GM12878 (cell line): ENCODE measurements at regions of chr12 and their contacts with region 1.

Region 1: GRCh38 chr12:97046901-97047300 is 139.8 kb downstream of the NEDD1 start:
- DNase-seq: no peak
- ATAC-seq: no peak
- H3K4me3 ChIP-seq: no peak overlapping the region
- H3K27ac ChIP-seq: no peak overlapping the region
- H3K4me1 ChIP-seq: no peaks in the 10 kb centered on the region
- H3K27me3 ChIP-seq: no peaks in the 10 kb centered on the region; a peak in 1 of 4 replicates
- CTCF ChIP-seq: no peak
- EP300 ChIP-seq: no peak
- POLR2A ChIP-seq: no peak
- RAD21 ChIP-seq: no peak

Region 2: DNA sequence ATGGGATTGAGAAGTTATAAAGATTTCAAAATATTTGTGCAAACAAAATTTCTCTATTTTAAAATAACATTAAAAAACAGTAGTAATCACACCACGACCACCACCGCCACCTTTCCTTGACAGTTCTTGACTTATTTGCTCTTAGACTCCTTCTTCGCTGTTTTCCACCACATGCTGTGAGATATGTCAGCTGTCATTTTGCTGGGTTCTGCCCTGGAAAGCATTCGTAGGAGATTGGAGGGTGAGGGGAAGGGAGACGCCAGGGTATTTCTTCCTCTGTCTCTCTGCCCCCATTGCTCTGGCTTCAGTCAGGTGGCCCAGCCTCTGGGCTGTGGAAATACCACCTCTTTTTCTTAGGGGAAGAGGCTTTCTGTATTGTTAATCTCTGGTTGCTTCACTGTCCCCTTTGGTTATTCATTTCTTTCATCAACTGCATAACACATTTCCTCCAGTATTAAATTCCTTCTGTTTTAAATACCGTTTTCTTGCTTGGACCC is 46.3 kb after region 1 on chr12:
- CTCF ChIA-PET with region 1: no interaction called
- POLR2A ChIA-PET with region 1: no interaction called
- RAD21 ChIA-PET with region 1: no interaction called
- SMC1A ChIA-PET with region 1: no interaction called
- in situ Hi-C with region 1: no loop called
- intact Hi-C with region 1: loop called (anchors 2 kb)
- DNase-seq: no peak
- ATAC-seq: no peak
- H3K4me3 ChIP-seq: no peak overlapping the region
- H3K27ac ChIP-seq: no peak overlapping the region
- H3K4me1 ChIP-seq: no peaks in the 10 kb centered on the region
- H3K27me3 ChIP-seq: no peaks in the 10 kb centered on the region
- CTCF ChIP-seq: no peak
- EP300 ChIP-seq: no peak
- POLR2A ChIP-seq: no peak
- RAD21 ChIP-seq: no peak

Region 3: GRCh38 chr12:97308576-97309198 is 261.8 kb after region 1 on chr12:
- CTCF ChIA-PET with region 1: no interaction called
- POLR2A ChIA-PET with region 1: no interaction called
- RAD21 ChIA-PET with region 1: no interaction called
- SMC1A ChIA-PET with region 1: no interaction called
- in situ Hi-C with region 1: no loop called
- intact Hi-C with region 1: no loop called
- DNase-seq: peak; percentile 15
- ATAC-seq: peak; percentile 45; the same call in 2 of the 3 replicates
- H3K4me3 ChIP-seq: no peak overlapping the region
- H3K27ac ChIP-seq: no peak overlapping the region
- H3K4me1 ChIP-seq: no peaks in the 10 kb centered on the region
- H3K27me3 ChIP-seq: no peaks in the 10 kb centered on the region
- CTCF ChIP-seq: peak; percentile 52 to 62 (median 57); a peak in 5 of 6 replicates
- EP300 ChIP-seq: no peak
- POLR2A ChIP-seq: no peak
- RAD21 ChIP-seq: peak; percentile 61